Activated CD4-positive, alpha-beta T cell treated with anti-CD3 and anti-CD28 coated beads, Interleukin-2, amount 10 ng/mL, durations not matched to agents 24 days and 14 days (primary cell): ENCODE measurements at regions of chr13 and their contacts with region 1.

Region 1: GRCh38 chr13:42497798-42498197 is 76.2 kb upstream of the TNFSF11 start:
- DNase-seq: peak; percentile 72
- H3K4me3 Mint-ChIP-seq: no peak overlapping the region
- H3K27ac Mint-ChIP-seq: peak overlapping the region; percentile 61
- H3K4me1 Mint-ChIP-seq: peaks cover 47% of the 10 kb centered on the region
- H3K27me3 Mint-ChIP-seq: no peaks in the 10 kb centered on the region

Region 2: DNA sequence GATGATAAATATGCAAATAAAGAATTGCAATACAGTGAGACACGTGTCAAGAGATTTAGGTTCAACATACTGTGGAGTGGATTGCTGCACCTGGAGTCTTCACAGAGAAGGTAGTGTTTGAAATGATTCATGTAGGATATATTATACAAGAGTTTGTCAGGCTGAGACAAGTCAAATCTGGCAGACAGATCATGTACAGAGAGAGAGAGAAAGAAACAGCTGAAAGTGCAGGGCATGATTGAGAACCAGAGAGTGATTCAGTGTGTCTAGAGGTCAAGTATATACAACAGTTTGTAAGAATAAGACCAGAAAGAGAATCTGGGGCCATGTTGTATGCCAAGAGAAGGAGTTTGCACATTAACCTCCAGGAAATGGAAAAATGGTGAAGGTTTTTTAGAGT is 534.8 kb before region 1 on chr13:
- intact Hi-C with region 1: no loop called
- DNase-seq: no peak
- H3K4me3 Mint-ChIP-seq: no peak overlapping the region
- H3K27ac Mint-ChIP-seq: peak overlapping the region; percentile 66
- H3K4me1 Mint-ChIP-seq: peaks cover 30% of the 10 kb centered on the region
- H3K27me3 Mint-ChIP-seq: no peaks in the 10 kb centered on the region

Region 3: GRCh38 chr13:42119875-42120274 is 377.9 kb before region 1 on chr13:
- intact Hi-C with region 1: no loop called
- DNase-seq: no peak
- H3K4me3 Mint-ChIP-seq: no peak overlapping the region
- H3K27ac Mint-ChIP-seq: no peak overlapping the region
- H3K4me1 Mint-ChIP-seq: peaks cover 6% of the 10 kb centered on the region
- H3K27me3 Mint-ChIP-seq: no peaks in the 10 kb centered on the region

Region 4: DNA sequence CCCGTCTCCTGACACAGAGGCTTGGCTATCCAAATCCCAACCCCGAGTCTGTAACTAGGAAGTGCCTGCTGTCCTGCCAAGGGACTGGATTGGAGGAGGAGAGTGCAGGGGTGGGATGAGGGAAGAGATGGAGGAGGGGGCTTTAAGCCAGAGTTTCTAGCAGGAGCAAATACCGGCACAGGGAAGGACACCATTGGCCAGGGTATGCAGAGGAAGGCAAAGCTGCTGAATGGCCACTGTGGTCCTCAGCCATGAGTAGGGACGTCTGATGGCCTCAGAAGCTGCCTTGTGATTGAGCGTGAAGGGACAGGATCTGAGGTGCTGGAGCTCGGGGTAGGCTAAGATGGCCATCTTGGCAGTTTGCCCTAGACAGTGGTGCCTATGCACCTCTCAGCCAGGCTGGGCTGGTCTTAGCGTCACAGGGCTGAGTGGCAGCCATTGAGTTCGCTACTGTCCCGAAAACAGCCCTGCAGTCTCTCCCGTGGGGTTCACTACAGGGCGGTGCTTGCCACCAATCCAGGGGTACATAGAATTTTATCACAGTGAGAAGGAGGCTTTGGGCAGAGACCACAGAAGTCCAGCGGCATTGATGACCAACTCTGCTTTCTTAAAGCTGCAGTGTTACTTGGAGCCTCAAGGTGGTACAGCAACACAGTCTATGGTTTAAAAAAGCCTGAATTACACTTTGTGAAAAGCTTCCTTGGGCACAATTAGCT is 164.0 kb before region 1 on chr13:
- intact Hi-C with region 1: loop called (anchors 5 kb)
- DNase-seq: peak; percentile 66
- H3K4me3 Mint-ChIP-seq: no peak overlapping the region
- H3K27ac Mint-ChIP-seq: peak overlapping the region; percentile 76
- H3K4me1 Mint-ChIP-seq: peaks cover 35% of the 10 kb centered on the region
- H3K27me3 Mint-ChIP-seq: no peaks in the 10 kb centered on the region

Region 5: GRCh38 chr13:42354241-42355091 is 143.3 kb before region 1 on chr13:
- intact Hi-C with region 1: loop called (anchors 1 kb)
- DNase-seq: peak; percentile 80
- H3K4me3 Mint-ChIP-seq: peak overlapping the region; percentile 77
- H3K27ac Mint-ChIP-seq: peak overlapping the region; percentile 99
- H3K4me1 Mint-ChIP-seq: peaks cover 54% of the 10 kb centered on the region
- H3K27me3 Mint-ChIP-seq: no peaks in the 10 kb centered on the region

Region 6: DNA sequence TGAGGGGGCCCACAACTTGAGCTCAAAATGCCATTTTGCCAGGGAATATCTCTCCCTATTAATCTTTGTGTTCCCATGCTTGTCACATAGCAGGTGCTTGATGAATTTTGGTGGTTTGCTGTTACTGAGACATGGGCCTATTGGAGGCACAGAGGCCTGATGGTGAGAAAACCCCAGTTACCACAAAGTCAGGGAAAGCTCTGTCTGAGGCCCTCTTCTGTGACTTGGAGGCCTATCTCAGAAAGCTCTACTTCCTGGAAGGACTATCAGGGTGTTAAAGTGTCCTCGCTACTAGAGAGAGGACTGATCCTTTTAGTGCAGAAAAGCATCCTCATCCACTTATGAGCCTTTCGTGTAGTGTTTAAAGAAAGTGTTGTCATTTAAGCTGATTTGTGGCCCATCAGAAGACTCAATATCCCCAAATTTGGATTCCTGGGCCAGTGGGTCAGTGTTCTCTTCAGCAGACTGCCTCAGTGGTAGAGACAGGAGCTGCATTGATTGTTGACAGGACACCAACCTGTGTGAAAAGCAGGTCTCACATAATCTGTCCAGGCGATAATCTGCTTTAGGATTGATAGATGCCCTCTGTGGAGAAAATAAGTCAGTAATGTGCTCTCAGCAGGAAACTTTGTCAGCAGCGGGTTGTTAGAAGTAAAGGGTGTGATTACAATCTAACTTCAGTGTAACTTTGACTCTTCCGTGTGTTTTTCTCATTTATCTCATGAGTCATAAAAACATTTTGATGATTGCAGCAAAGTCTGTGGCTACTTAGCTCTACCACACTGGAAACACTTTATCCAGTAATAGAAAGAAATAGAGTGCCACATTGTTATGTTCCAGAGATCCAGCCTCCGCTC is 104.9 kb before region 1 on chr13:
- intact Hi-C with region 1: loop called (anchors 1 kb)
- DNase-seq: peak; percentile 86
- H3K4me3 Mint-ChIP-seq: peak overlapping the region; percentile 91
- H3K27ac Mint-ChIP-seq: peak overlapping the region; percentile 97
- H3K4me1 Mint-ChIP-seq: peaks cover 76% of the 10 kb centered on the region
- H3K27me3 Mint-ChIP-seq: no peaks in the 10 kb centered on the region

Region 7: DNA sequence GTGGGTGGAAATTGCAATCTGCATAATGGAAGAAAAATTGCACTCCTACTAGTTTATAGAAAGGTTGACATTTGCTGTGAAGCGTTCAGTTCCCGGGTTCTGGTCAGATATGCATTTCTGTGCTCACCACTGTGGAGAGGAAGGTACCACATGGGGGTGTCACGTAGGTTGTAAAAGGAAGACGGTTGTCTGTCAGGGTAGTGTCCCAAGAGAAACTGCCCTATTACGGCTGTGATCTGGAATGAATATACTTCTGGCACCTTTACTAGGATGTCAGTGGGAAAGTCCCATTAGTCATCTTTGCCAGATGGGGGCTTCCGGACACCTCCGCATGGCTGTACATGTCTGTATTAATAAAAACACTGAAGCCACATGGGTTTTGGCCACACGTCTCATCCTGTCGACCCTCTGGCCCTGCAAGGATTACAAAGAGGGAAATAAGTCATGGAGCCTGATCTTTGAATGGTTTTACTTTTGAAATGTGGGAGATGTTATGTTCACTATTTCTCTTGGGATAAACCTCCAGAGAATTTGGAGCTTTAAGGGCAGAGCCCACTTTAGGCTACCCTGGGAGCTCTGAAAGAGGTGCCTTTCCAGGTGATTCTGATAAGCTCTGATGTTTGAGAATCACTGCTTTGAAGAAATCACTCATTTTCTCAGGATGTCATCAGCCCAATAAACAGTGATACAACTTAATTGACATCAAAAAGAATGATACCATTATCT is 92.0 kb before region 1 on chr13:
- intact Hi-C with region 1: loop called (anchors 1 kb)
- DNase-seq: peak; percentile 81
- H3K4me3 Mint-ChIP-seq: peak overlapping the region; percentile 51
- H3K27ac Mint-ChIP-seq: peak overlapping the region; percentile 95
- H3K4me1 Mint-ChIP-seq: peaks cover 58% of the 10 kb centered on the region
- H3K27me3 Mint-ChIP-seq: no peaks in the 10 kb centered on the region

Region 8: DNA sequence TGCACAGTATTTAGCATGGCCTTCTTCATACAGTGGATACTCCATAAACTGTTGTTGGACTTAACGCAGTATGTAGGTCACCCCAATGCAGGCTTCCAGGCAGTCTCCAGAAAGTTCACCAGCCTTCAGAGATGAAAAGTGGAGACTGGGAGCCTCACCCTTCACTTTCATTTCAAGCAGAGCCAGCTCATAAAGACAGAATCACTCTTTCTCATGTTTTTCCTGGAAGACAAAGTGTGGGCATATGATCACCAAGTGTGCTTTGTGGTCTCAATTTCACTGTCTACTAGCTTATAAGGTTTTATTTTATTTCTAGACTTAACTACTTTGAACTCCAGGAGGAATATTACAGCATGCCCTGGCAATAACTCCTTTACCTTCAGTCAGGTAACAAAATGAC is 49.8 kb after region 1 on chr13:
- intact Hi-C with region 1: loop called (anchors 1 kb)
- DNase-seq: no peak
- H3K4me3 Mint-ChIP-seq: no peak overlapping the region
- H3K27ac Mint-ChIP-seq: no peak overlapping the region
- H3K4me1 Mint-ChIP-seq: peaks cover 15% of the 10 kb centered on the region
- H3K27me3 Mint-ChIP-seq: no peaks in the 10 kb centered on the region

Region 9: DNA sequence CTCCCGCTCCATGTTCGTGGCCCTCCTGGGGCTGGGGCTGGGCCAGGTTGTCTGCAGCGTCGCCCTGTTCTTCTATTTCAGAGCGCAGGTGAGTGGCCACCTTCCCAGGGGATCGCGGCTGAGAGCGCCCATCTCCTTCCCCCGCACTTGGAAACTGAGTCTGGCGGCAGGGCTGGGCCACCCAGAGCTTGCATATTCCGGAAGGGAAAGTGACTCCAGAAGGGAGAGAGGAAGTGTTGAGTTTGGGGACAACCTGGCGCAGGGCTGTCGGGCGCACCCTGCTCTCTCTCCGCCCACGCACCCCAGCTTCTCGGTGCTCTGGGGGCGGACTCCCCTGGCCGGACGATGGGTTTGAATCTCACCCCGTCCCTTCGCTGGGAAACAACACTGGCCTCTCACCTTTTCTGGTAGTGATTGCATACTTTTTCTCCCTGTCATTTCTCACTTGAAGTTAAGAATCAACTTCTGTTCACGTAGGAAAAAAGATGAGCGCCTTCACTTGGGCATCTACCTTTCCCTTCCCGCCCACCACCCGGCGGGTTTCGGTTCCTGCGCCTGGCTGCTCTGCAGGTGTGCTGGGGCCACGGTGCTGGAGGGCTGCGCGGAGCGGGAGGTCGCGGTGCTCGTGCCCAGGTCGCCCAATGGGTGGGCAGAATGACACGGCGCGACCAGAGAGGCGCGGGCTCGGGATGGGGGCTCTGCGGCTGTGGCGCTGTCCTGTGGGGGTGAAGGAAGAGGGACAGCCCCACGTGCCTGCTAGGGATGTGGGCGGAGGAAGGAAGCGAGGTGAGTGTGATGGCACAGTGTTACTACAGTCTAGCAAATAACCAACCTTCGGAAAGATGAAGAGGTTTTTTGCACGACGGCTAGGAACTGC is 76.9 kb after region 1 on chr13:
- intact Hi-C with region 1: loop called (anchors 1 kb)
- DNase-seq: peak; percentile 72
- H3K4me3 Mint-ChIP-seq: peak overlapping the region; percentile 82
- H3K27ac Mint-ChIP-seq: peak overlapping the region; percentile 27
- H3K4me1 Mint-ChIP-seq: peaks cover 22% of the 10 kb centered on the region
- H3K27me3 Mint-ChIP-seq: peaks cover 54% of the 10 kb centered on the region

Region 10: DNA sequence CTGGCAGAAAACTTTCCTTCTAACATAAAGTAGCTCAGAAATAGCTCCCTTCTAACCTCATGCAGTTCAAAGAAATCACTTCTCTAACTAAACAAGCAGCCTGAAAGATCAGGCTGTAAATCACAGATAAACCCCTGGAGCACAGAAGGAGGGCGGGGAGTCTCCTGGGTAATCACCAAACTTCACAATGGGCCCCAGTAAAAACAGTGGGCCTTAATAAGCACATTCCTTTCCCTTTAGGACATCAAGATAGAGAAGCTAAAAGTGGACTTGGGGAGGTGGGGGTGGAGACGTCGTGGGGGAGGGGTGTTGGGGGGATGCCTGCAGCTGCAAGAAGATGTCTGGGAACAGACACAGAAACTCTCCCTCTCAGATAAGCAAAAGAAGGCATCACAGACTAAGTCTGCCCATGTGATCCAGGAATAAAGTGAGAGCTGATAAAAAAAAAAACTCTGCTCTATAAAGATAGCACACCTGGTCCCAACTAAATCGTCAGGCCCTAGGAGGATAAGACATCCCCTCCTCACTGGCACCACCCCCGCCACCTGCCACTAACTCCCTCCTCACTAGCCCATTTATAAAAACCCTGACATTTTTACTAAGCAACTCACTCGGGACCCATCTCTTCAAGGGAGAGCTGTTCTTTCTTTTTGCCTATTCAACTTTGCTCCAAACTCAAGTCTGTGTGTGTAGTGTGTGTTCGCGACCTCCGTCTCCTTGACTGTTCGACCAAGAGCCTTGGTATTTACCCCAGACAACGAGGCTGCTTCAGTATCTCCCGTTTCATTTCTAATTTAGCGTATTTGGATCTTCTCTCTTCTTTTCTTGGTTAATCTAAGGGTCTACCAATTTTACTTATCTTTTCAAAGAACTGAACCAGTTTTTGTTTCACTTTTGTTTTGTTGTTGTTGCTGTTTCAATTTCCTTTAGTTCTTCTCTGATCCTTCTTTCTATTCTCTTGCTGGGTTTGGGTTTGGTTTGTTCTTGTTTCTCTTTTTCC is 557.3 kb after region 1 on chr13:
- intact Hi-C with region 1: no loop called
- DNase-seq: peak; percentile 74
- H3K4me3 Mint-ChIP-seq: no peak overlapping the region
- H3K27ac Mint-ChIP-seq: no peak overlapping the region
- H3K4me1 Mint-ChIP-seq: peaks cover 28% of the 10 kb centered on the region
- H3K27me3 Mint-ChIP-seq: no peaks in the 10 kb centered on the region